Thyroid gland (tissue), 4 donors: ENCODE measurements at regions of chr4 and their contacts with region 1.

Region 1: DNA sequence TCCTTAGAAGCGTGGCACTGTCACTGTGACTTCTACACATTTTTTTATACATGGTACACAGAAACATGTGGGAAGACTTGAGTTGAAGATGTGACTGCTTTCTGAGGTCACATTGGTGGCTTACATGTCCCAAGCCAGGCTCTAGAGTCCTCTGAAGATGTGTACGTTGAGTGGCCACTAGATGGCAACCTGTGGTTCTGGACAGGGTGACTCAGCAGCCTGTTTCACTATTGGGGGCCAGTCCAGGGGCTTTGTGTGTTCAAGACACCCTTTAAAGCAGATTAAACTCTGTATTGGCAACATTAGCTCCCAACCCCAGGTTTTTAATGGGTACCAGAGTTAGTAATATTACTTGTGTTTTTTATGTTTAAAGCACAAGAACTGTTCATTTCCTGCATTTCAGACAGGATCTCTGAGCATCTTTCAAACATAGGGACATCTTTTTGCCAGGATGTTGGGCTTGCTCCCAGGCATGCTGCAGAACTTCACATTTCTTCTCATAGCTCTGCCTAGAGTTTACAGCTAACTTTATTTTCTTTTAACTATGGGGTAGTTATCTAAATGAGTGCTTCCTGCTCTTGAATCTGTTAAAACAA is 53.0 kb downstream of the DCUN1D4 start:
- DNase-seq: peak; percentile 58 to 63
- H3K4me3 ChIP-seq: no peak overlapping the region
- H3K27ac ChIP-seq: peak overlapping the region in 2 of 3 donors; percentile 31 to 38
- H3K4me1 ChIP-seq: peaks cover 0 to 33% of the 10 kb centered on the region in 2 donors
- H3K27me3 ChIP-seq: no peaks in the 10 kb centered on the region
- CTCF ChIP-seq: peak; percentile 40 to 78 (median 58)
- POLR2A ChIP-seq: no peak

Region 2: GRCh38 chr4:51842554-51843308 is 53.2 kb before region 1 on chr4 and contains the start of gene DCUN1D4:
- intact Hi-C with region 1: no loop called
- DNase-seq: peak; percentile 100
- H3K4me3 ChIP-seq: peak within 1 kb of the TSS; percentile 78 to 85 (median 82)
- H3K27ac ChIP-seq: peak within 1 kb of the TSS; percentile 79 to 95 (median 86)
- H3K4me1 ChIP-seq: peaks cover 13% of the 10 kb centered on the region in 2 donors
- H3K27me3 ChIP-seq: no peaks in the 10 kb centered on the region
- CTCF ChIP-seq: peak in 3 of 6 experiments; percentile 26 to 45 (median 40)
- POLR2A ChIP-seq: peak; percentile 67 to 83
- total RNA-seq, gene DCUN1D4: 44.6 to 81.4 (median 51.7) TPM

Region 3: DNA sequence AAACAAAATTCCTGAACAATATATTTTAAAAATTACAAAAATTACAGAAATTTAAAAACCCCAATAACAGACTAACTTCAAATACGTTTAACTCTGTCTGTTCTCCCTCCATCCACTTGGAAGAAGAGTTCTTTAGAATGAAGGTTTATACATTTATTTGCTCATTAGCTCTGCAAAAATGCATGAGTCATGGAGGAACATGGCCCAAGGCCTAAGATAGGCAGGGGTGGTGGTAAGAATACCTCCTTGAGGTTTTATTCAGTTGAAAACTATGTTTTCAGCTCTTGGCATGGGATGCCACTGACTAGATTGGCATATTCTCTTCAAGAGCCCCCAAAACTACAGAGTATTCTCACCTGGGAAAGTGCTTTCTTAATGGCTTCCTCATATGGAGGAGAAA is 133.1 kb after region 1 on chr4:
- intact Hi-C with region 1: loop called (anchors 10 kb)
- DNase-seq: no peak
- H3K4me3 ChIP-seq: no peak overlapping the region
- H3K27ac ChIP-seq: no peak overlapping the region
- H3K4me1 ChIP-seq: no peaks in the 10 kb centered on the region
- H3K27me3 ChIP-seq: no peaks in the 10 kb centered on the region
- CTCF ChIP-seq: no peak
- POLR2A ChIP-seq: no peak